ENCODE measurements at regions of chr9 and their contacts with region 1.

Region 1: GRCh38 chr9:3059781-3060468 is 216.0 kb upstream of the PUM3 start:
- DNase-seq: no peak
- H3K4me3 ChIP-seq: no peak overlapping the region
- H3K27ac ChIP-seq: no peak overlapping the region
- H3K4me1 ChIP-seq: no peaks in the 10 kb centered on the region
- H3K27me3 ChIP-seq: no peaks in the 10 kb centered on the region
- CTCF ChIP-seq: no peak

Region 2: GRCh38 chr9:3087697-3088096 is 27.8 kb after region 1 on chr9:
- CTCF ChIA-PET with region 1: no interaction called
- POLR2A ChIA-PET with region 1: no interaction called
- intact Hi-C with region 1: loop called (anchors 2 kb)
- DNase-seq: no peak
- H3K4me3 ChIP-seq: no peak overlapping the region
- H3K27ac ChIP-seq: no peak overlapping the region
- H3K4me1 ChIP-seq: no peaks in the 10 kb centered on the region
- H3K27me3 ChIP-seq: no peaks in the 10 kb centered on the region
- CTCF ChIP-seq: no peak

Region 3: GRCh38 chr9:3118080-3118479 is 58.2 kb after region 1 on chr9:
- CTCF ChIA-PET with region 1: no interaction called
- POLR2A ChIA-PET with region 1: no interaction called
- intact Hi-C with region 1: loop called (anchors 5 kb)
- DNase-seq: no peak
- H3K4me3 ChIP-seq: no peak overlapping the region
- H3K27ac ChIP-seq: no peak overlapping the region
- H3K4me1 ChIP-seq: no peaks in the 10 kb centered on the region
- H3K27me3 ChIP-seq: no peaks in the 10 kb centered on the region
- CTCF ChIP-seq: no peak